ENCODE measurements at regions of chr19 and their contacts with region 1.

Region 1: GRCh38 chr19:18224525-18225354 is 1.5 kb downstream of the PDE4C start:
- DNase-seq: peak; percentile 99
- H3K4me3 ChIP-seq: peak overlapping the region; percentile 27 to 34
- H3K27ac ChIP-seq: peak overlapping the region in 1 of 2 donors; percentile 65
- H3K4me1 ChIP-seq: peaks cover 0 to 16% of the 10 kb centered on the region in 2 donors
- H3K27me3 ChIP-seq: peaks cover 0 to 13% of the 10 kb centered on the region in 2 donors
- CTCF ChIP-seq: peak in 1 of 4 experiments; percentile 2
- POLR2A ChIP-seq: peak in 1 of 2 donors; percentile 21

Region 2: GRCh38 chr19:18091217-18091608 is 133.5 kb before region 1 on chr19:
- intact Hi-C with region 1: no loop called
- DNase-seq: no peak
- H3K4me3 ChIP-seq: no peak overlapping the region
- H3K27ac ChIP-seq: no peak overlapping the region
- H3K4me1 ChIP-seq: no peaks in the 10 kb centered on the region
- H3K27me3 ChIP-seq: no peaks in the 10 kb centered on the region
- CTCF ChIP-seq: no peak
- POLR2A ChIP-seq: no peak

Region 3: DNA sequence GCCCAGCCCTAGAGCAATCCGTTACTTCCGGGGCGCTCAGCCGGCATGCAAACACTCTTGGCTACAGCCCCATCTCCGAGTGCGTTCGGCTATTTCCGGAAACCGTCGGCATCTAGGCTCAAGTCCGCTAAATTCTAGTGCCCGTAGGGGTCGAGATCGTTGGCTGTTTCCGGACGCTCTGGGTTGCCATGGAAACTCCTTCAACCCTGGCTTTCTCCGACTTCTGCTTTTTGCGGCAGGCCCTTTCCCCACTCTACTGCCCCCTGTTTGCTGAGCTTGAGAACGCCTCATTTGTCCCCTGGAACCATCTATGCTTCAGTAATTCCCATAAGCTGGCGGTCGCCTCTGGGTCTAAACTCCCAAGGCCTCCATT is 72.3 kb before region 1 on chr19:
- intact Hi-C with region 1: loop called (anchors 5 kb)
- DNase-seq: peak; percentile 98
- H3K4me3 ChIP-seq: peak overlapping the region; percentile 64 to 97
- H3K27ac ChIP-seq: peak overlapping the region; percentile 87 to 95
- H3K4me1 ChIP-seq: peaks cover 7 to 24% of the 10 kb centered on the region in 2 donors
- H3K27me3 ChIP-seq: no peaks in the 10 kb centered on the region
- CTCF ChIP-seq: peak; percentile 49 to 74 (median 61)
- POLR2A ChIP-seq: no peak

Region 4: GRCh38 chr19:18281082-18282020 is 56.6 kb after region 1 on chr19 and contains the start of gene JUND:
- intact Hi-C with region 1: no loop called
- DNase-seq: peak; percentile 98
- H3K4me3 ChIP-seq: peak within 1 kb of the TSS; percentile 73 to 78
- H3K27ac ChIP-seq: peak within 1 kb of the TSS; percentile 95 to 100
- H3K4me1 ChIP-seq: peaks cover 0 to 10% of the 10 kb centered on the region in 2 donors
- H3K27me3 ChIP-seq: no peaks in the 10 kb centered on the region
- CTCF ChIP-seq: peak in 2 of 4 experiments; percentile 10 to 39
- POLR2A ChIP-seq: peak; percentile 100
- total RNA-seq, gene JUND: 152 to 386 (median 290) TPM

Measured in uterus (tissue), 4 donors.